ENCODE measurements at regions of chr20 and their contacts with region 1.

Region 1: GRCh38 chr20:21387528-21387927 is 9.8 kb downstream of the NKX2-4 start:
- DNase-seq: no peak
- ATAC-seq: no peak
- H3K4me3 ChIP-seq: no peak overlapping the region
- H3K27ac ChIP-seq: no peak overlapping the region
- H3K4me1 ChIP-seq: no peaks in the 10 kb centered on the region
- H3K27me3 ChIP-seq: no peaks in the 10 kb centered on the region

Region 2: DNA sequence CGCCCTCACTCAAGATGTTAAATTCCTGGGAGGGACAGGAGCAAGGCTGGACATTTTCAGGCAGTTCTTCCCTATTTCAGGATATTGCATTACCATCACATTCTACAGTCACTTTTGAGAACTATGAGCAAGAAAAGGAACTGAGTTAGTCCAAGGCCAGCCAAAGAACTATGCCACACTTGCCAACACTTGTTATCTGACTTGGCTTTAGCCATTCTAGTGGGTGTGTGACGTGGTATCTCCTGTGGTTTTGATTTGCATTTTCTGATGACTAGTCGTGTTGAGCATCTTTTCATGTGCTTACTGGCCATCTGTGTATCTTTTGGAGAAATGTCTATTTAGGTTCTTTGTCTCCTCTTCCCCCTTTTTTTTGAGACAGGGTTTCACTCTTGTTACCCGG is 72.4 kb before region 1 on chr20:
- intact Hi-C with region 1: loop called in 1 of 4 experiments (anchors 10 kb)
- DNase-seq: no peak
- ATAC-seq: peak; percentile 57 to 62
- H3K4me3 ChIP-seq: no peak overlapping the region
- H3K27ac ChIP-seq: no peak overlapping the region
- H3K4me1 ChIP-seq: peaks cover 8% of the 10 kb centered on the region
- H3K27me3 ChIP-seq: no peaks in the 10 kb centered on the region

Measured in right cardiac atrium (tissue), 5 donors.